Dorsolateral prefrontal cortex (tissue), 120 donors: ENCODE measurements at regions of chr17 and their contacts with region 1.

Region 1: GRCh38 chr17:5078106-5079028 is at the start of gene ZFP3:
- DNase-seq: peak; percentile 76 to 91 (median 86)
- H3K4me3 ChIP-seq: peak within 1 kb of the TSS; percentile 49 to 98 (median 86)
- H3K27ac ChIP-seq: peak within 1 kb of the TSS in 57 of 59 donors; percentile 1 to 93 (median 78)
- H3K27me3 ChIP-seq: peaks cover 0 to 3% (median 0%) of the 10 kb centered on the region in 45 donors
- CTCF ChIP-seq: peak in 39 of 56 donors; percentile 5 to 64 (median 36)
- total RNA-seq, gene ZFP3: 4.7 to 13.7 (median 9.1) TPM

Region 2: GRCh38 chr17:5191541-5192417 is 113.4 kb after region 1 on chr17 and contains the start of gene ZNF594:
- intact Hi-C with region 1: loop called in 1 of 2 experiments (anchors 5 kb)
- DNase-seq: peak; percentile 88 to 97 (median 96)
- H3K4me3 ChIP-seq: peak within 1 kb of the TSS; percentile 62 to 99 (median 91)
- H3K27ac ChIP-seq: peak within 1 kb of the TSS; percentile 14 to 95 (median 87)
- H3K27me3 ChIP-seq: no peaks in the 10 kb centered on the region
- CTCF ChIP-seq: peak; percentile 41 to 92 (median 76)
- total RNA-seq, gene ZNF594: 14.7 to 32.7 (median 20.5) TPM